Prostate gland (tissue), 2 donors: ENCODE measurements at regions of chr10 and their contacts with region 1.

Region 1: GRCh38 chr10:14093730-14094484 is 236.8 kb downstream of the FRMD4A start:
- DNase-seq: no peak
- H3K4me3 ChIP-seq: no peak overlapping the region
- H3K27ac ChIP-seq: no peak overlapping the region
- H3K4me1 ChIP-seq: no peaks in the 10 kb centered on the region
- H3K27me3 ChIP-seq: no peaks in the 10 kb centered on the region
- CTCF ChIP-seq: peak; percentile 13 to 50 (median 37)
- POLR2A ChIP-seq: no peak

Region 2: GRCh38 chr10:13613519-13613918 is 480.4 kb before region 1 on chr10:
- intact Hi-C with region 1: loop called (anchors 5 kb)
- DNase-seq: peak; percentile 9
- H3K4me3 ChIP-seq: no peak overlapping the region
- H3K27ac ChIP-seq: no peak overlapping the region
- H3K4me1 ChIP-seq: peaks cover 3% of the 10 kb centered on the region
- H3K27me3 ChIP-seq: no peaks in the 10 kb centered on the region
- CTCF ChIP-seq: peak in 3 of 4 experiments; percentile 23 to 54 (median 45)
- POLR2A ChIP-seq: no peak

Region 3: GRCh38 chr10:13956826-13957225 is 137.1 kb before region 1 on chr10:
- intact Hi-C with region 1: loop called (anchors 5 kb)
- DNase-seq: peak; percentile 8
- H3K4me3 ChIP-seq: no peak overlapping the region
- H3K27ac ChIP-seq: peak overlapping the region; percentile 30 to 36
- H3K4me1 ChIP-seq: no peaks in the 10 kb centered on the region
- H3K27me3 ChIP-seq: no peaks in the 10 kb centered on the region
- CTCF ChIP-seq: peak in 2 of 4 experiments; percentile 11 to 51
- POLR2A ChIP-seq: no peak